BJ (cell line): ENCODE measurements at regions of chr12 and their contacts with region 1.

Region 1: GRCh38 chr12:122090759-122091515 is 12.4 kb downstream of the MLXIP start:
- DNase-seq: peak; percentile 89
- H3K4me3 ChIP-seq: no peak overlapping the region
- H3K27me3 ChIP-seq: no peaks in the 10 kb centered on the region
- CTCF ChIP-seq: no peak

Region 2: GRCh38 chr12:122078141-122079032 is 12.6 kb before region 1 on chr12 and contains the start of gene MLXIP:
- CTCF ChIA-PET with region 1: interaction called, 13 read pairs
- POLR2A ChIA-PET with region 1: no interaction called
- DNase-seq: no peak
- H3K4me3 ChIP-seq: peak within 1 kb of the TSS; percentile 69
- H3K27me3 ChIP-seq: no peaks in the 10 kb centered on the region
- CTCF ChIP-seq: no peak
- polyA plus RNA-seq, gene MLXIP: 3.3 and 4.8 TPM in 2 replicates

Region 3: GRCh38 chr12:122135437-122136425 is 44.8 kb after region 1 on chr12:
- CTCF ChIA-PET with region 1: no interaction called
- POLR2A ChIA-PET with region 1: interaction called, 35 read pairs
- DNase-seq: no peak
- H3K4me3 ChIP-seq: no peak overlapping the region
- H3K27me3 ChIP-seq: no peaks in the 10 kb centered on the region
- CTCF ChIP-seq: no peak

Region 4: GRCh38 chr12:122148657-122149056 is 57.7 kb after region 1 on chr12:
- CTCF ChIA-PET with region 1: no interaction called
- POLR2A ChIA-PET with region 1: no interaction called
- DNase-seq: no peak
- H3K4me3 ChIP-seq: no peak overlapping the region
- H3K27me3 ChIP-seq: peaks cover 2% of the 10 kb centered on the region; the same call in 1 of the 2 replicates
- CTCF ChIP-seq: no peak